ENCODE measurements at regions of chrX and their contacts with region 1.

Region 1: GRCh38 chrX:132615391-132616131 is 126.7 kb upstream of the MBNL3 start:
- DNase-seq: peak; percentile 55
- H3K4me3 Mint-ChIP-seq: no peak overlapping the region
- H3K27ac Mint-ChIP-seq: no peak overlapping the region
- H3K4me1 Mint-ChIP-seq: no peaks in the 10 kb centered on the region
- H3K27me3 Mint-ChIP-seq: no peaks in the 10 kb centered on the region
- CTCF ChIP-seq: peak; percentile 48

Region 2: DNA sequence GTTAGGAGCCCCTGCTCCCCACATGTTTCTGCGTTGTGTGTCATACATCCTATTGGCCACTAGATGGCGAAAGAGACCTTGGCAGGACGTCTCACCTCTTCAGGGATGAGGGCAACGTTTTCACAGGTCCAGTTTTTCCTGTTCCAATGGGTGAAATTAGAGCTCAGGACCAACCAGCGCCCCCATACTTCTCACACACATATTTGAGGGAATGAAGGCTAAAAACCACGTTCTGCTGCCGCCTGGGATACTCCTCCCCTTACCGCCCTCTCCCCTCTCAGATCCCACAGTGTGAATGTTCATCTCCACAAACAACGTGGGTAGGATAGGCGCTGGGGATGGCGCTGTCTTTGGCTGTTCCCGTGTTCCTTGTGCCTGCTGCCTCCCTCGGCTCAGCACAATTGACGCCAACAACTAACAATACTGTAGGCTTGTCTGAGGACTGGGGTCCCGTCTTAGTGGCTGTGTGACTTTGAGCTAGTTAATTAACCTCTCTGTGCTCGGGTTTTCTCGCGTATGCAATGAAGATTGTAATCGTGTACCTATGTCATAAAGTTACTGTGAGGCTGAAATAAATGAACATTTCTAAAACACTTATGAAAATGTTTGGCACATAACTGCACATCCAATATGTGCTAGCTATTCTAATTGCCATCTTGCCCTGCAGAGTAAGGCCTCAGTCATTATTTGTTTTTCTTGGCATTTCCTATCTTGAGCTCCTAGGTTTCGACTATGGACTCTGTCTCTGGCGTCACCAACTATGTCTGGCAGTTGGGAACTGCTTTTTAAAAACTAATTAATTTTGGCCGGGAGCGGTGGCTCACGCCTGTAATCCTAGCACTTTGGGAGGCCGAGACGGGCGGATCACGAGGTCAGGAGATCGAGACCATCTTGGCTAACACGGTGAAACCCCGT is 773.8 kb before region 1 on chrX:
- CTCF ChIA-PET with region 1: interaction called, 3 read pairs
- intact Hi-C with region 1: loop called (anchors 5 kb)
- DNase-seq: peak; percentile 51
- H3K4me3 Mint-ChIP-seq: peak overlapping the region; percentile 21
- H3K27ac Mint-ChIP-seq: no peak overlapping the region
- H3K4me1 Mint-ChIP-seq: no peaks in the 10 kb centered on the region
- H3K27me3 Mint-ChIP-seq: no peaks in the 10 kb centered on the region
- CTCF ChIP-seq: peak; percentile 66

Region 3: DNA sequence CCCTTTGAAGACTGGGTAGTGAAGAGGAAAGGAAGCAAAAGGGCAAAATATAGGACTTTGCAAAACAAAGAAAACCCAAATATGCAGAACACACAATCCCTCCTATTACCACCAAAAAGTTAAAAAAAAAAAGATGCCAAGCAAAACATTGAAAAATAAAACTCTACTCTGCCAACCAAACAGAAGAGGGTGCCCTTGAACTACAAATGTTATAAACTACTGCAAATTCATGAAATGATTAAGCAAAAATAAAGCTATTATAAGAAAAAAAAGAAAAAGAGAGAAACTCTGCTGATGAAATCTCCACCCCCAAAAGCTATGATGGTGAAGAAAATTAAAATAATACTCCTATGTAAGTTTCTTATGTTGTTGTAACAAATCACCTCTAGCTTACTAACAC is 761.0 kb before region 1 on chrX:
- CTCF ChIA-PET with region 1: no interaction called
- intact Hi-C with region 1: loop called (anchors 5 kb)
- DNase-seq: no peak
- H3K4me3 Mint-ChIP-seq: no peak overlapping the region
- H3K27ac Mint-ChIP-seq: no peak overlapping the region
- H3K4me1 Mint-ChIP-seq: no peaks in the 10 kb centered on the region
- H3K27me3 Mint-ChIP-seq: no peaks in the 10 kb centered on the region
- CTCF ChIP-seq: no peak

Region 4: DNA sequence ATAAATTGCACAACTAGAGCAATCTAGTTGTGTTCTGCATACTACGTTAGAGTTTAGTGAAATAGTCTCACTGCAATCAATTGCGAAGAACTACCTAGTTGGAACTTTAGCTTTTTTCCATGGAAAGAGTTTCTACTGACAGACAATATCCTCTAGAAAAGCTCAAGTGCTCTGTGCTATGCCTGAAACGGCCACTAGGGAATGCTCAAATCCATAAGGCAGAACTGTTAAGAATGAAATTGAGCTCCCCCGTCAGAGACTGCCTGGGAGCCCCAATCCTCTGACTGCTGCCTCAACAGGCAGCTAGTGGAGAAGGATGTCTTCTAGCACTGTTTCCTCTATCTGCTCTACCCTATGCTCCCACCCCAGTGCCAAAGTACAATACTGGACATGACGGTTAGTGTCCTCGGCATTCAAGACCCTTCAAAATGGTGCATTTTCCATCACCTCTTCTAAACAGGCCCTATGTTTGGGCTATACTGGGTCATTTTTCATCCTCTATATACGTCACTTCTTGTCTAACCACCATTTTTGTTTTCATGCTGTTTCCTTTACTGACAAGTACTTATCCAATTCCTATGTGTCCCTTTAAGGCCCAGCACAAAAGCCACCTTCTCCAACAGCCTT is 523.0 kb before region 1 on chrX:
- CTCF ChIA-PET with region 1: interaction called, 6 read pairs
- intact Hi-C with region 1: loop called (anchors 2 kb)
- DNase-seq: peak; percentile 52
- H3K4me3 Mint-ChIP-seq: no peak overlapping the region
- H3K27ac Mint-ChIP-seq: no peak overlapping the region
- H3K4me1 Mint-ChIP-seq: no peaks in the 10 kb centered on the region
- H3K27me3 Mint-ChIP-seq: no peaks in the 10 kb centered on the region
- CTCF ChIP-seq: peak; percentile 41

Region 5: GRCh38 chrX:132226169-132226568 is 389.4 kb before region 1 on chrX:
- CTCF ChIA-PET with region 1: interaction called, 6 read pairs
- intact Hi-C with region 1: loop called (anchors 1 kb)
- DNase-seq: no peak
- H3K4me3 Mint-ChIP-seq: no peak overlapping the region
- H3K27ac Mint-ChIP-seq: no peak overlapping the region
- H3K4me1 Mint-ChIP-seq: peaks cover 8% of the 10 kb centered on the region
- H3K27me3 Mint-ChIP-seq: no peaks in the 10 kb centered on the region
- CTCF ChIP-seq: no peak

Region 6: GRCh38 chrX:132292793-132293192 is 322.8 kb before region 1 on chrX:
- CTCF ChIA-PET with region 1: interaction called, 8 read pairs
- intact Hi-C with region 1: loop called (anchors 1 kb)
- DNase-seq: peak; percentile 22
- H3K4me3 Mint-ChIP-seq: no peak overlapping the region
- H3K27ac Mint-ChIP-seq: no peak overlapping the region
- H3K4me1 Mint-ChIP-seq: no peaks in the 10 kb centered on the region
- H3K27me3 Mint-ChIP-seq: peaks cover 8% of the 10 kb centered on the region
- CTCF ChIP-seq: no peak

Region 7: DNA sequence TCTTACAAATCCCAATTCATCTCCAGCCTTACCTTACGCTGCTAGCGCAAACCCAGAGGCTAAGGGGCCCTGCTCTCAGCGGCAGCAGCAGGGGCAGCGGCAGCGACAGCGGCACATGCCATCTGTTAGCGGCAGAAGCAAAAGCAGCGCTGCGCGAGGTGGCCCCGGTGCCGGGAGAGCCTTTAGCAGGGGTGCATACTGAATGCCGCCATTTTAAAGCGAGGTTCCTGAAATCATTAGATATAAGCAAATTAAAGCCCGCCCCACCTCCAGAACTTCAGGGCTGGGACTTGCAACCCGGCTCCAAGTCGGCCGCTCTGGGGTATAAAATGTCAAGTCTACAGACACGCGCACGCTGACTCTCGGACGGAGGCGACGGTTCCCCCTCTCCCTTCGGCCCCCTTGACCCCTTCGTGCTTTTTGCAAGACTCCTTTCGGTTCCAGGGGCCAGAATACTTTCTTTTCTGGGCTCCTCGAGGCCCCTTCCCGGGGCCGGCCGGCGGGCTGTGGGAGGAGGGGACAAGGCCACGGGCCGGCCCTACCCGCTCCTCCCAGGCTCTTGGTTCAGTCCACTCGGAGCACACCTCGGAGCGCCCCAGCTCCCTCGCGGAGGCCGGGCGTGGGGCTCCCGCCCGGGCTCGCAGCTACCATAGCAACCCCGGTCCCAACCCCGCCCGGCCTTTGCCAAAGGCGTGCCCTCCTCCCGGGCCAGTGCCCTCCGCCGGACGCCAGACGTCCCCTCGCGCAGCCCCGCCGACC is 126.6 kb before region 1 on chrX and contains the start of gene MBNL3:
- CTCF ChIA-PET with region 1: interaction called, 6 read pairs
- intact Hi-C with region 1: loop called (anchors 5 kb)
- DNase-seq: peak; percentile 69
- H3K4me3 Mint-ChIP-seq: peak within 1 kb of the TSS; percentile 71
- H3K27ac Mint-ChIP-seq: peak within 1 kb of the TSS; percentile 79
- H3K4me1 Mint-ChIP-seq: peaks cover 10% of the 10 kb centered on the region
- H3K27me3 Mint-ChIP-seq: no peaks in the 10 kb centered on the region
- CTCF ChIP-seq: no peak
- total RNA-seq, gene MBNL3: 18.9 and 21.0 TPM in 2 replicates

Region 8: GRCh38 chrX:132563976-132564375 is 51.6 kb before region 1 on chrX:
- CTCF ChIA-PET with region 1: no interaction called
- intact Hi-C with region 1: no loop called
- DNase-seq: no peak
- H3K4me3 Mint-ChIP-seq: no peak overlapping the region
- H3K27ac Mint-ChIP-seq: no peak overlapping the region
- H3K4me1 Mint-ChIP-seq: no peaks in the 10 kb centered on the region
- H3K27me3 Mint-ChIP-seq: no peaks in the 10 kb centered on the region
- CTCF ChIP-seq: no peak

Region 9: GRCh38 chrX:132602701-132603100 is 12.9 kb before region 1 on chrX:
- CTCF ChIA-PET with region 1: no interaction called
- intact Hi-C with region 1: no loop called
- DNase-seq: no peak
- H3K4me3 Mint-ChIP-seq: no peak overlapping the region
- H3K27ac Mint-ChIP-seq: no peak overlapping the region
- H3K4me1 Mint-ChIP-seq: no peaks in the 10 kb centered on the region
- H3K27me3 Mint-ChIP-seq: no peaks in the 10 kb centered on the region
- CTCF ChIP-seq: no peak

Measured in Calu3 (cell line).